ENCODE measurements at regions of chr5 and their contacts with region 1.

Region 1: GRCh38 chr5:128395073-128395472 is 143.0 kb downstream of the FBN2 start:
- DNase-seq: no peak
- ATAC-seq: peak; percentile 64

Region 2: DNA sequence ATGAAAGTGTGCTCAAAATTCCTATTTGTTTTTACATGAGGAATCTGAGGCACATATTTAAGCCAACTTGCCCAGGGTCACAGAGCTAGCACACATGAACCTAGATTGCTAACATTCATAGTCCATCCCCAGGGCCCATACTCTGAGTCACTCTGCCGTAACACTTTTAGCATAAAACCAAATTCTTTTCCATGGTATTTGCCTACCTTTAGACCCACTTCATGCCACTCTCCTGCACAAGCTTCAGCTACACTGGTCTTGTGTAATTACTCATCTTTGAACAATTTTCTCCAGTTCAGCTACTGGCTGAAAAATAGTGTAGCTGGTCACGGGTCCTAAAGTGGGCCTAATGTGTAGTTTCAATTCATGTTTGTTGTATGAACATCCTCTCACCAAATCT is 110.8 kb before region 1 on chr5:
- intact Hi-C with region 1: no loop called
- DNase-seq: no peak
- ATAC-seq: no peak

Region 3: DNA sequence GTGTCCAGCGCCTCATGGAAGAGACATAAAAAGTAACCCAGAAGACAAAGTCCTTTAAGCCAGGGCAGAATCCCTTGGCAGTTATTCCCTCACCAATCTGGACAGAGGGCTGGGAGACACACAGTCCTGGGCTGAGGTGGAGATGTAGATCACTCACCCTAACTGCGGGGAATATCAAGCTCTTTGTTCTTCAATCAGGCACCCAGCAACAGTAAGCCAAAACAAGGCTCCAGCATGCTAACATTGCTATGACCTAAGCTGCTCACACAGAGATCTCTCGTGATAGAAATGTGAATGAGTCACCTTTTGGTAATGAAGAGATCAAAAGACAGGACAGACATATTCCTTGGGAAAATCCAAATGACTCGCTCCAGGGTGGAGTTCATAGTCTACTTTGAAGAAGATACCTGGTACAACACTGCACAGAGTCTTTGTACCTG is 41.7 kb after region 1 on chr5:
- intact Hi-C with region 1: no loop called
- DNase-seq: no peak
- ATAC-seq: no peak

Region 4: DNA sequence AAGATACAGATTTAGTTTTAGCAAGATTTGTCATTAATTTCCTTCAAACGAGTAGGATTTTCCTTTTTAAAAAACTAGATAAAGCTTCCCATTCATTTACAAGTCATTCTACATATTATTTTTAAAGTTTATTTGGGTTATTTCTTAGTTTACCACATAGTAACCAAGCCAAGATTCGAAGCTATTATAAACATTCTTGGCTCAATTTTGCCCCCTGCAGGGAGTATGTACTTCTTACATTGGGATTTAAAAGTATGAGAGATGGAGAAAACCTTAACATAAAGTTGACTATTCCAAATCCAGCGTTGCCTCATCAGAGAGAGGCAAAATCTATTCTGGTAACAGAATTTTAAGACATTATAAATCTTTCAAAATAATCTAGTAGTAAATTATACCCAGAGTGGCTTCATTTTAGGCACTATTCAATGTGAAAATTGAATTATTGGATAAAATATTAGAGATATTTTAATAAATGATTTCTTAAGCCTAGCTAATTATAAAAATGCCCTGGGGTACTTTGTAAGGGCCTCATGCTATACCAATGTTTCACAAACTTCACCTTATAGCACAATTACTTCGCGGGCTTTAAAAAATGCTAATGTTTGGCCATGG is 103.9 kb after region 1 on chr5:
- intact Hi-C with region 1: loop called (anchors 10 kb)
- DNase-seq: no peak
- ATAC-seq: no peak